Esophagus muscularis mucosa (tissue), 4 donors: ENCODE measurements at regions of chr16 and their contacts with region 1.

Region 1: GRCh38 chr16:24737391-24737871 is 8.0 kb downstream of the TNRC6A start:
- DNase-seq: no peak
- H3K4me3 ChIP-seq: peak overlapping the region in 3 of 4 donors; percentile 16 to 28 (median 17)
- H3K27ac ChIP-seq: peak overlapping the region; percentile 91 to 94 (median 94)
- H3K4me1 ChIP-seq: peaks cover 92 to 100% (median 99%) of the 10 kb centered on the region in 4 donors
- H3K27me3 ChIP-seq: no peaks in the 10 kb centered on the region
- CTCF ChIP-seq: no peak
- EP300 ChIP-seq: no peak
- POLR2A ChIP-seq: no peak

Region 2: DNA sequence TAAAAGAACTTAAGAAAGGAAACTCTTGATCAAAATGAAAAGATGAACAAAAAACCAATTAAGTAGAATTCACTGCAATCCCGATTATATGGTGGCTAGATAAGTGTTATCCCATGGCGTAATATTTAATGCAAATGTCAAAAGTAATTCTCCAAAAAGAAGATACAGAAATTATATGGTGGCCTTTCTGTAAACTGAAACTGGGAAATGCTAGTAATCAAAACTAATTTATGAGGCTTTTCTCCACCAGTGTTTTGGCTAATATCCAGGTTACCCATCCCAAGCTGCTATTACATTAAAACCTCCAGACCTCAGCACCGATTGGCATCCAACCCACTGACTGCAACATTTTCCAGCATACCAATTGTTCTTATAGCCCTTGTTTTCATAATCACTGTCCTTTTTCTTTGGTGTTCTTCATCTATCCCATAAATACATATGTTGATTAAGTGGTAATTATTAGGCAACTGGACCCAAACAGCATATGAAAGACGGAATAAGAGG is 85.2 kb before region 1 on chr16:
- intact Hi-C with region 1: no loop called
- DNase-seq: no peak
- H3K4me3 ChIP-seq: no peak overlapping the region
- H3K27ac ChIP-seq: no peak overlapping the region
- H3K4me1 ChIP-seq: no peaks in the 10 kb centered on the region
- H3K27me3 ChIP-seq: no peaks in the 10 kb centered on the region
- CTCF ChIP-seq: no peak
- EP300 ChIP-seq: no peak
- POLR2A ChIP-seq: no peak

Region 3: DNA sequence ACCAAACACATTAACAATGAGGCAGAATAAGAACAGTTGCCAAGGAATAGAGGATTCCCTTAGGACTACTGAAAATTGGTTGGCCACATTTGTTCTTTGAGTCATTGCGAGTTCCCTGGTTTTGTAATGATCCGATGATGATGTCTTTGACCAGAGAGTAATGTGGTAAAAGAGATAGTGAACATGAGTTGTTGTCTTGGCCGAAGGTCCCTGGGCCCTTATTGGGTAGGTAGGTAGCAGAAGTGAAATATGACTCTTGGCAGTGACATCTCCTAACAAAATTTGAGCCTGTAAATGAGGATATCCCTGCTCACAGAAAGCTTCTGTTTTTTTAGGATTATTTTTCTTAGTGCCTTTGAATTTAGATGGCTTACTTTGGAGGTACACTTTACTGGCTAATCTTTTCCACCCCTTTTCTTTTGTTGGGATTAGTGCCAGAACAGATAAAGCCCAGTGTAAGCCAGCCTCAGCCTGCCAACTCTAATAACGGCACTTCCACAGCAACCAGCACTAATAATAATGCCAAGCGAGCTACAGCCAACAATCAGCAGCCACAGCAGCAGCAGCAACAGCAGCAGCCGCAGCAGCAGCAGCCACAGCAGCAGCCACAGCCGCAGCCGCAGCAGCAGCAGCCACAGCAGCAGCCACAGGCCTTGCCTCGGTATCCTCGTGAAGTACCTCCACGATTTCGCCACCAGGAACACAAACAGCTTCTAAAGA is 39.2 kb after region 1 on chr16:
- intact Hi-C with region 1: loop called (anchors 5 kb)
- DNase-seq: no peak
- H3K4me3 ChIP-seq: no peak overlapping the region
- H3K27ac ChIP-seq: peak overlapping the region; percentile 50 to 72 (median 60)
- H3K4me1 ChIP-seq: peaks cover 48 to 77% (median 72%) of the 10 kb centered on the region in 4 donors
- H3K27me3 ChIP-seq: no peaks in the 10 kb centered on the region
- CTCF ChIP-seq: no peak
- EP300 ChIP-seq: no peak
- POLR2A ChIP-seq: no peak

Region 4: DNA sequence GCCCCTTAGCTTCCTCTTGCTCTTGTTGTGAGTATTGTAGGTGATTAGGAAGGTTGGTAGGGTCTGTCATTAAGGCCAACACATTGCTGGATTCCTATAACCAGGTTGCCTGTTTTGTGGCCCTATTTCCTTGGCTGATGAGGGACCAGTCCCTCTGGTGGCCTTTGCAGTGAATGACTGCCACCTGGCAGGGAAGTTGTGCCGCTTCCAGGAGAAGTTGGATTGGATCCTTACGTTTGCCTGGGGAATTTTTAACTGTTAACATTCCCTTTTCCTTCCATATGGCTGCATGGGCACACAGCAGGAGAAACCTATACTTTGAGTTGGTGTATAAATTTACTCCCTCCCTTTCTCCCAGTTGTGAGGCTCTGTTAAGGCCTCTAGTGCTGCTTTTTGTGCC is 406.5 kb after region 1 on chr16:
- intact Hi-C with region 1: no loop called
- DNase-seq: no peak
- H3K4me3 ChIP-seq: no peak overlapping the region
- H3K27ac ChIP-seq: no peak overlapping the region
- H3K4me1 ChIP-seq: peaks cover 0 to 15% (median 7%) of the 10 kb centered on the region in 4 donors
- H3K27me3 ChIP-seq: no peaks in the 10 kb centered on the region
- CTCF ChIP-seq: no peak
- EP300 ChIP-seq: no peak
- POLR2A ChIP-seq: no peak